ENCODE measurements at regions of chr9 and their contacts with region 1.

Region 1: GRCh38 chr9:96009690-96010472 is 134.4 kb downstream of the ERCC6L2 start:
- DNase-seq: peak; percentile 75 to 78
- ATAC-seq: peak; percentile 72 to 94 (median 92)
- H3K4me3 ChIP-seq: no peak overlapping the region
- H3K4me3 Mint-ChIP-seq: peak overlapping the region; percentile 79
- H3K27ac ChIP-seq: peak overlapping the region; percentile 99
- H3K27ac Mint-ChIP-seq: no peak overlapping the region
- H3K4me1 ChIP-seq: peaks cover 35% of the 10 kb centered on the region
- H3K4me1 Mint-ChIP-seq: peaks cover 5 to 46% of the 10 kb centered on the region in 2 donors
- H3K27me3 ChIP-seq: no peaks in the 10 kb centered on the region
- H3K27me3 Mint-ChIP-seq: no peaks in the 10 kb centered on the region
- CTCF ChIP-seq: no peak

Region 2: GRCh38 chr9:94726495-94727191 is 1283.2 kb before region 1 on chr9 and contains the start of gene AOPEP:
- intact Hi-C with region 1: loop called (anchors 2 kb)
- DNase-seq: peak; percentile 99 to 100
- ATAC-seq: peak; percentile 95 to 99 (median 98)
- H3K4me3 ChIP-seq: peak within 1 kb of the TSS; percentile 93
- H3K4me3 Mint-ChIP-seq: peak within 1 kb of the TSS; percentile 96
- H3K27ac ChIP-seq: peak within 1 kb of the TSS; percentile 95
- H3K27ac Mint-ChIP-seq: peak within 1 kb of the TSS; percentile 95 to 99
- H3K4me1 ChIP-seq: peaks cover 11% of the 10 kb centered on the region
- H3K4me1 Mint-ChIP-seq: peaks cover 10 to 18% of the 10 kb centered on the region in 2 donors
- H3K27me3 ChIP-seq: no peaks in the 10 kb centered on the region
- H3K27me3 Mint-ChIP-seq: no peaks in the 10 kb centered on the region
- CTCF ChIP-seq: no peak
- total RNA-seq, gene AOPEP: 20.1 to 22.6 (median 20.6) TPM

Region 3: GRCh38 chr9:95494416-95495371 is 515.2 kb before region 1 on chr9:
- intact Hi-C with region 1: loop called (anchors 2 kb)
- DNase-seq: peak; percentile 72 to 94
- ATAC-seq: peak; percentile 86 to 91 (median 90)
- H3K4me3 ChIP-seq: peak overlapping the region; percentile 38
- H3K4me3 Mint-ChIP-seq: peak overlapping the region; percentile 98
- H3K27ac ChIP-seq: peak overlapping the region; percentile 96
- H3K27ac Mint-ChIP-seq: peak overlapping the region; percentile 96 to 99
- H3K4me1 ChIP-seq: peaks cover 44% of the 10 kb centered on the region
- H3K4me1 Mint-ChIP-seq: peaks cover 66% of the 10 kb centered on the region in 2 donors
- H3K27me3 ChIP-seq: no peaks in the 10 kb centered on the region
- H3K27me3 Mint-ChIP-seq: peaks cover 0 to 9% of the 10 kb centered on the region in 2 donors
- CTCF ChIP-seq: no peak

Region 4: DNA sequence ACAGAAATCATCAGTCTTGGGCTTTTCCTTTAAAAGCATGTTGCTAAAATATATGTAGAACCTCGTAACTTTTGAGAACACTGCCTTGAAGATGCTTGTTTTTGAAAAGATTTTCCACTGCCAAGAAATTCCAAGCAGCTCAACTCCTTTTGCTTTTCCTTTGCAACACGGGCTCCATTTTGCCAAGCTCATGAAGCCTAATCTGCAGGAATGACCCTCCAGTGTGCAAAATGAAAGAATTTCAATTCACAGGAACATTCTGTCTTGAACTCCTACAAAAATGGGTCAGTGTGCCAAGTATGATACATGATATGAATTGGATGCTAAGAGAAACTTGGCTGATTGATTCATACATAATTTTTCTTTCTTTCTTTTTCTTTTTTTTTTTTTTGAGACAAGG is 169.8 kb before region 1 on chr9:
- intact Hi-C with region 1: no loop called
- DNase-seq: no peak
- ATAC-seq: no peak
- H3K4me3 ChIP-seq: no peak overlapping the region
- H3K4me3 Mint-ChIP-seq: no peak overlapping the region
- H3K27ac ChIP-seq: no peak overlapping the region
- H3K27ac Mint-ChIP-seq: no peak overlapping the region
- H3K4me1 ChIP-seq: no peaks in the 10 kb centered on the region
- H3K4me1 Mint-ChIP-seq: no peaks in the 10 kb centered on the region
- H3K27me3 ChIP-seq: no peaks in the 10 kb centered on the region
- H3K27me3 Mint-ChIP-seq: no peaks in the 10 kb centered on the region
- CTCF ChIP-seq: no peak

Region 5: GRCh38 chr9:95875305-95876137 is 134.4 kb before region 1 on chr9 and contains the start of gene ERCC6L2:
- intact Hi-C with region 1: loop called (anchors 1 kb)
- DNase-seq: peak; percentile 92 to 97
- ATAC-seq: peak; percentile 85 to 93 (median 89)
- H3K4me3 ChIP-seq: peak within 1 kb of the TSS; percentile 95
- H3K4me3 Mint-ChIP-seq: no peak within 1 kb of the TSS
- H3K27ac ChIP-seq: no peak within 1 kb of the TSS
- H3K27ac Mint-ChIP-seq: no peak within 1 kb of the TSS
- H3K4me1 ChIP-seq: peaks cover 20% of the 10 kb centered on the region
- H3K4me1 Mint-ChIP-seq: peaks cover 9 to 16% of the 10 kb centered on the region in 2 donors
- H3K27me3 ChIP-seq: no peaks in the 10 kb centered on the region
- H3K27me3 Mint-ChIP-seq: no peaks in the 10 kb centered on the region
- CTCF ChIP-seq: no peak
- total RNA-seq, gene ERCC6L2: 37.1 to 45.8 (median 38.6) TPM

Region 6: GRCh38 chr9:96020792-96021550 is 11.1 kb after region 1 on chr9:
- intact Hi-C with region 1: loop called (anchors 1 kb)
- DNase-seq: peak; percentile 64 to 74
- ATAC-seq: peak; percentile 62 to 75 (median 68)
- H3K4me3 ChIP-seq: peak overlapping the region; percentile 56
- H3K4me3 Mint-ChIP-seq: peak overlapping the region; percentile 93
- H3K27ac ChIP-seq: peak overlapping the region; percentile 95
- H3K27ac Mint-ChIP-seq: peak overlapping the region; percentile 91 to 99
- H3K4me1 ChIP-seq: peaks cover 47% of the 10 kb centered on the region
- H3K4me1 Mint-ChIP-seq: peaks cover 76 to 86% of the 10 kb centered on the region in 2 donors
- H3K27me3 ChIP-seq: no peaks in the 10 kb centered on the region
- H3K27me3 Mint-ChIP-seq: no peaks in the 10 kb centered on the region
- CTCF ChIP-seq: no peak

Region 7: GRCh38 chr9:96136992-96137670 is 127.2 kb after region 1 on chr9:
- intact Hi-C with region 1: no loop called
- DNase-seq: peak in 1 of 2 donors; percentile 22
- ATAC-seq: peak; percentile 82 to 88 (median 85)
- H3K4me3 ChIP-seq: no peak overlapping the region
- H3K4me3 Mint-ChIP-seq: peak overlapping the region; percentile 74
- H3K27ac ChIP-seq: peak overlapping the region; percentile 59
- H3K27ac Mint-ChIP-seq: peak overlapping the region; percentile 54 to 81
- H3K4me1 ChIP-seq: peaks cover 14% of the 10 kb centered on the region
- H3K4me1 Mint-ChIP-seq: peaks cover 8 to 10% of the 10 kb centered on the region in 2 donors
- H3K27me3 ChIP-seq: no peaks in the 10 kb centered on the region
- H3K27me3 Mint-ChIP-seq: peaks cover 9 to 23% of the 10 kb centered on the region in 2 donors
- CTCF ChIP-seq: no peak

Region 8: GRCh38 chr9:96150324-96151227 is 140.7 kb after region 1 on chr9:
- intact Hi-C with region 1: loop called (anchors 2 kb)
- DNase-seq: peak; percentile 47 to 67
- ATAC-seq: peak; percentile 84 to 90 (median 86)
- H3K4me3 ChIP-seq: no peak overlapping the region
- H3K4me3 Mint-ChIP-seq: peak overlapping the region; percentile 45
- H3K27ac ChIP-seq: no peak overlapping the region
- H3K27ac Mint-ChIP-seq: peak overlapping the region in 1 of 2 donors; percentile 41
- H3K4me1 ChIP-seq: peaks cover 21% of the 10 kb centered on the region
- H3K4me1 Mint-ChIP-seq: peaks cover 15 to 25% of the 10 kb centered on the region in 2 donors
- H3K27me3 ChIP-seq: peaks cover 26% of the 10 kb centered on the region
- H3K27me3 Mint-ChIP-seq: peaks cover 26 to 35% of the 10 kb centered on the region in 2 donors
- CTCF ChIP-seq: no peak

Region 9: GRCh38 chr9:96299823-96300222 is 289.9 kb after region 1 on chr9:
- intact Hi-C with region 1: no loop called
- DNase-seq: no peak
- ATAC-seq: no peak
- H3K4me3 ChIP-seq: no peak overlapping the region
- H3K4me3 Mint-ChIP-seq: no peak overlapping the region
- H3K27ac ChIP-seq: no peak overlapping the region
- H3K27ac Mint-ChIP-seq: no peak overlapping the region
- H3K4me1 ChIP-seq: no peaks in the 10 kb centered on the region
- H3K4me1 Mint-ChIP-seq: no peaks in the 10 kb centered on the region
- H3K27me3 ChIP-seq: no peaks in the 10 kb centered on the region
- H3K27me3 Mint-ChIP-seq: peaks cover 10 to 25% of the 10 kb centered on the region in 2 donors
- CTCF ChIP-seq: no peak